ENCODE measurements at regions of chr4 and their contacts with region 1.

Region 1: DNA sequence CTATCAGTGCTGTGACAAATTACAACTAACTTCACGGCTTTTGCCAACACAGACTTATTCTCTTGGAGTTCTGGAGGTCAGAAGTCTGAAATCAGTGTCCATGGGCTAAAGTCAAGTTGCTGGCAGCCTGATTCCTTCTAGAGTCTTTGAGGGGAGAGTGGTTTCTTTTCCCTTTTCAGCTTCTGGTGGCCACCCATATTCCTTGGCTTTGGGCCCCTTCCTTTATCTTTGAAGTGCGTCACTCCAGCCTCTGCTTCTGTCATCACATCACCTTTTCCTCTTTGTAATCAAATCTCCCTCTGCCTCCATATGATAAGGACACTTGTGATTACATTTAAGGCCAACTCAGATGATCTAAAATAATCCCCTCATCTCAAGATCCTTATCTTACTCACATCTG is 9.0 kb downstream of the FAM114A1 start:
- DNase-seq: no peak
- H3K4me3 ChIP-seq: no peak overlapping the region
- CTCF ChIP-seq: no peak

Region 2: DNA sequence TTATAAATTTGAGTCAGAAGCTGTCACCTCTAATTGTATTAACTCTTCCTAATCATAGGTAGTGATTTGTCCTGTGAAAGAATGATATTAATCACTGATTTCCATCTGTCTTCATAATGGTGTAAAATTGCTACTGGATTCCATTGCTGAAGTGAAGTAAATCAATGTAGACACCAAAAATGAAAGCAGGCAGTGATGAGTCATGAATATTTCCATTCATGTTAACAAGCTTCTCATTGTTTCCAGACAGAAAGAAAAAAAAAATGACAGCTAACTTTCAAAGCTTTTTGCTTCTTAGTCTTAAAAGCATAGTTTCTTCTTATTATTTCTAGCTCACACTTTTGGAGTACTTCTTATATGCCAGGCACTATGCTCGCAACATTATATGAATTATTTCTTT is 12.5 kb after region 1 on chr4:
- CTCF ChIA-PET with region 1: interaction called, 7 read pairs
- POLR2A ChIA-PET with region 1: interaction called, 10 read pairs
- DNase-seq: no peak
- H3K4me3 ChIP-seq: no peak overlapping the region
- CTCF ChIP-seq: no peak